CD4-positive, alpha-beta memory T cell (primary cell): ENCODE measurements at regions of chr13 and their contacts with region 1.

Region 1: GRCh38 chr13:30774214-30774730 is 38.9 kb downstream of the ALOX5AP start:
- DNase-seq: peak; percentile 55 to 73 (median 67)
- H3K4me3 ChIP-seq: peak overlapping the region in 1 of 2 donors; percentile 48
- H3K4me3 Mint-ChIP-seq: peak overlapping the region; percentile 65 to 84 (median 74)
- H3K27ac ChIP-seq: peak overlapping the region; percentile 58
- H3K27ac Mint-ChIP-seq: peak overlapping the region; percentile 86 to 96 (median 94)
- H3K4me1 ChIP-seq: peaks cover 23% of the 10 kb centered on the region
- H3K4me1 Mint-ChIP-seq: peaks cover 25 to 42% (median 32%) of the 10 kb centered on the region in 4 donors
- H3K27me3 ChIP-seq: no peaks in the 10 kb centered on the region
- H3K27me3 Mint-ChIP-seq: no peaks in the 10 kb centered on the region

Region 2: GRCh38 chr13:30796132-30796572 is 21.9 kb after region 1 on chr13:
- CTCF ChIA-PET with region 1: interaction called, 3 read pairs
- POLR2A ChIA-PET with region 1: interaction called, 13 read pairs
- intact Hi-C with region 1: no loop called
- DNase-seq: peak in 2 of 5 donors; percentile 11 to 36
- H3K4me3 ChIP-seq: peak overlapping the region in 1 of 2 donors; percentile 10
- H3K4me3 Mint-ChIP-seq: peak overlapping the region; percentile 63 to 88 (median 73)
- H3K27ac ChIP-seq: no peak overlapping the region
- H3K27ac Mint-ChIP-seq: peak overlapping the region; percentile 58 to 92 (median 84)
- H3K4me1 ChIP-seq: peaks cover 26% of the 10 kb centered on the region
- H3K4me1 Mint-ChIP-seq: peaks cover 20 to 34% (median 27%) of the 10 kb centered on the region in 4 donors
- H3K27me3 ChIP-seq: no peaks in the 10 kb centered on the region
- H3K27me3 Mint-ChIP-seq: no peaks in the 10 kb centered on the region